ENCODE measurements at regions of chr6 and their contacts with region 1.

Region 1: DNA sequence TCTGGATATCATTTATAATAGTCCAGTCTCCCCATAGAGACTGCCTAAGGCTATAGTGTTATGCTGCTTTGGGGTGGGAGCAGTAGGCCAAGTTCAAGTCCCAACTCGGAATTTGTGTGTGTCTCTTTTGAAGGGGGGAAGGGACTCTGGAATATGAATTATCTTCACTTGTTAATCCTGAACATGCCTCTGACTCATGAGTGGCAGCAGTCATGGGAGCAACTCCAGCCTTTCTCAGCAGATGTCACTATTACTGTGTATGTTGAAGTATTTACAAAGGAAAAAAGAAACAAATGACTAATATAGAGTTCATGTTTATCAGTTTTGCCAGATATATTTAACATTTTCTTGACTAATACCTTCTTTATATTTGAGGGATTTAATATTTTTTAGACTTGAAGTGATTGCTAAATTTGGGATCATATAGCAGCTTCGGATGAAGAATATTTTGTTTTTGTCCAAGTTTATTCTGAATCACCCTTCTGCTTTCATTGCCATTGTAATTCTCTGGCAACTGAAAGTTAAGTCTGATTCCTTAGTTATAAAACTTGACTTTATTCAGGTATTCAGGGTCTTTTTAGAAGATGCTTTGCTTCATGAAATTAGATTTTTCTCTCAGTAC is 23.4 kb downstream of the FAM217A start:
- DNase-seq: peak; percentile 68
- ATAC-seq: peak; percentile 81
- H3K4me3 ChIP-seq: no peak overlapping the region
- H3K27ac ChIP-seq: no peak overlapping the region
- H3K4me1 ChIP-seq: peaks cover 25% of the 10 kb centered on the region
- H3K27me3 ChIP-seq: no peaks in the 10 kb centered on the region
- CTCF ChIP-seq: peak; percentile 74
- EP300 ChIP-seq: no peak
- POLR2A ChIP-seq: no peak
- RAD21 ChIP-seq: peak; percentile 76

Region 2: GRCh38 chr6:4018172-4018905 is 37.2 kb before region 1 on chr6:
- CTCF ChIA-PET with region 1: no interaction called
- POLR2A ChIA-PET with region 1: interaction called, 17 read pairs
- in situ Hi-C with region 1: no loop called
- intact Hi-C with region 1: no loop called
- DNase-seq: peak; percentile 96
- ATAC-seq: peak; percentile 80
- H3K4me3 ChIP-seq: peak overlapping the region; percentile 81 to 91 (median 82)
- H3K27ac ChIP-seq: peak overlapping the region; percentile 97
- H3K4me1 ChIP-seq: peaks cover 32% of the 10 kb centered on the region
- H3K27me3 ChIP-seq: no peaks in the 10 kb centered on the region; a peak in 1 of 5 replicates
- CTCF ChIP-seq: peak; percentile 74
- EP300 ChIP-seq: no peak
- POLR2A ChIP-seq: peak; percentile 93 to 95
- RAD21 ChIP-seq: peak; percentile 31; the same call in 1 of the 2 replicates

Region 3: GRCh38 chr6:4125936-4126864 is 70.7 kb after region 1 on chr6:
- CTCF ChIA-PET with region 1: interaction called, 7 read pairs
- POLR2A ChIA-PET with region 1: no interaction called
- in situ Hi-C with region 1: no loop called
- intact Hi-C with region 1: loop called (anchors 2 kb)
- DNase-seq: peak; percentile 84
- ATAC-seq: peak; percentile 94
- H3K4me3 ChIP-seq: no peak overlapping the region; a peak in 1 of 6 replicates
- H3K27ac ChIP-seq: peak overlapping the region; percentile 11
- H3K4me1 ChIP-seq: peaks cover 34% of the 10 kb centered on the region
- H3K27me3 ChIP-seq: no peaks in the 10 kb centered on the region
- CTCF ChIP-seq: peak; percentile 44
- EP300 ChIP-seq: no peak
- POLR2A ChIP-seq: no peak
- RAD21 ChIP-seq: no peak

Region 4: GRCh38 chr6:4135665-4136353 is 80.3 kb after region 1 on chr6:
- CTCF ChIA-PET with region 1: no interaction called
- POLR2A ChIA-PET with region 1: interaction called, 10 read pairs
- in situ Hi-C with region 1: no loop called
- intact Hi-C with region 1: no loop called
- DNase-seq: peak; percentile 85
- ATAC-seq: peak; percentile 86
- H3K4me3 ChIP-seq: peak overlapping the region; percentile 66 to 86 (median 81)
- H3K27ac ChIP-seq: peak overlapping the region; percentile 20
- H3K4me1 ChIP-seq: peaks cover 44% of the 10 kb centered on the region
- H3K27me3 ChIP-seq: no peaks in the 10 kb centered on the region; a peak in 1 of 5 replicates
- CTCF ChIP-seq: peak; percentile 43
- EP300 ChIP-seq: no peak
- POLR2A ChIP-seq: peak; percentile 29 to 75; a peak in 2 of 4 replicates
- RAD21 ChIP-seq: no peak

Region 5: DNA sequence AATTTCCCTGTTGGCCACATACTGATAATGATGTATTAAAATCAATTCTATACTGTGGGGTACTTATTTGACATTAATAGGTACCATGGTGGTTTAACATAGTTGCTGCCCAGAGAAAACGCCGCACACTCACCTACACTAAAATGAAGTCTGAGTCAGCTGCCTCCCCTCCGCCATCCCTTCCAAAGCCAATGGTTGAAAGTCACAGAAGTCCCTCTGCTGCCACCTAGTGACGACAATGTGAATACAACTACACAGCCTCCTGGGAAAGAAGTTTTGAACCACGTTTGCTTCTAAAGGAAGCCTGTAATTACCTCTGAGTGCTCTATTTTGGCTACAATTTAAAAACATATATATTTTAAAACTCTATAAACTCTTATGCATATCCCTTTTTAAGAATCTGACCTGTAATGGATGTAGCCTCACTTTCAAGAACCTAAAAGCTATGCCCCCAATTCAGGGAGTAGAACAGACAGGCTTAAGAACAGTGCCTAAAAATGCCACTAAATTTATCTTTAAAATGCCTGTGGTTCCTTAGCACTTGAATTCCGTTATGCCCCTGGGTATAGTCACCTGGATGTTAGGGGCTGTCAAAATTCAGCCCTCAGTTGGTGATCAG is 100.4 kb after region 1 on chr6:
- CTCF ChIA-PET with region 1: interaction called, 44 read pairs
- POLR2A ChIA-PET with region 1: no interaction called
- in situ Hi-C with region 1: loop called (anchors 5 kb)
- intact Hi-C with region 1: loop called (anchors 1 kb)
- DNase-seq: peak; percentile 84
- ATAC-seq: peak; percentile 95
- H3K4me3 ChIP-seq: no peak overlapping the region
- H3K27ac ChIP-seq: no peak overlapping the region
- H3K4me1 ChIP-seq: peaks cover 5% of the 10 kb centered on the region; the same call in 1 of the 2 replicates
- H3K27me3 ChIP-seq: peaks cover 2 to 24% of the 10 kb centered on the region in 2 experiments; a peak in 3 of 5 replicates
- CTCF ChIP-seq: peak; percentile 93
- EP300 ChIP-seq: no peak
- POLR2A ChIP-seq: no peak
- RAD21 ChIP-seq: peak; percentile 85

Region 6: GRCh38 chr6:4210629-4211423 is 155.3 kb after region 1 on chr6:
- CTCF ChIA-PET with region 1: interaction called, 11 read pairs
- POLR2A ChIA-PET with region 1: no interaction called
- in situ Hi-C with region 1: no loop called
- intact Hi-C with region 1: loop called (anchors 1 kb)
- DNase-seq: peak; percentile 48
- ATAC-seq: peak; percentile 98
- H3K4me3 ChIP-seq: no peak overlapping the region
- H3K27ac ChIP-seq: no peak overlapping the region
- H3K4me1 ChIP-seq: no peaks in the 10 kb centered on the region
- H3K27me3 ChIP-seq: peaks cover 0 to 6% of the 10 kb centered on the region in 2 experiments; a peak in 2 of 5 replicates
- CTCF ChIP-seq: peak; percentile 81
- EP300 ChIP-seq: no peak
- POLR2A ChIP-seq: no peak
- RAD21 ChIP-seq: peak; percentile 56